Calu3 (cell line): ENCODE measurements at regions of chr2 and their contacts with region 1.

Region 1: DNA sequence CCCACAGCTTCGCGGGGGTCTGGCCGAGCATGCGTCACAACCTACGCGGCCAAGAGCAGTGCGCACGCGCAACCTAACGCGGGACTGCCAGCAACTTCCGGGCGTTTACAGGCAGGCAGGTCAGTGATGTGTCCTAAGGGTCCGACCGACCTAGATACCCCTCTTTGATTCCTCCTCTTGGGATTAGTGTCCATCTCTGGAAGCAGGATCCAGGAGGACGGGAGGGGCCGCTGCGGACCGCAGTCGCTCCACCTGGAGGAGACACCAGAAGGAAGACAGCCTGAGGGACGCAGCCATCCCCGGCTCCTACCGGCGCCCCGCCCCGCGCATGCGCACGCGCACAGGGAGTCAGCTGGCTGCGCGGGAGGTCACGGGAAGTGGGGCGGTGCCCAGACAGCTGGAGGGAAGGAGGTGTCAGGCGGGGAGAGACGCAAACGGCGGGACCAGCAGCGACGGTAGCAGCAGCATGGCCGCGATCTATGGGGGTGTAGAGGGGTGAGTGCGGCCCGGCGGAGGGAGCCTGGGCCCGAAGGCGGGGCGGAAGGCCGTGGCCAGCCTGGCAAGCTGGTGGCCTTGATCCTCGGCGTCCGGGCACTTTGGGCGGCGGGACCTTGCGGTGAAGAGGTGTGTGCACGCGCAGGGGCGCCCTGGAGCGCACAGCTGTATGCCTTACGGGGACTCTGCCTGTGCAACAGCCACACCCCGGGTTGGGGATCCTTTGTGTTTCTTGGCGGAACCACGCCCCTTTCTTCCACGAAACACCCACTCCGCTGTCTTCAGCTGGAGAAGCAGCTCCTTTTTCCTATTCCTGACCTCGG is at the start of gene NAGK:
- DNase-seq: peak; percentile 98
- H3K4me3 Mint-ChIP-seq: peak within 1 kb of the TSS; percentile 97
- H3K27ac Mint-ChIP-seq: peak within 1 kb of the TSS; percentile 90
- H3K4me1 Mint-ChIP-seq: peaks cover 31% of the 10 kb centered on the region
- H3K27me3 Mint-ChIP-seq: peaks cover 20% of the 10 kb centered on the region
- CTCF ChIP-seq: no peak
- total RNA-seq, gene NAGK: 63.2 and 75.0 TPM in 2 replicates

Region 2: DNA sequence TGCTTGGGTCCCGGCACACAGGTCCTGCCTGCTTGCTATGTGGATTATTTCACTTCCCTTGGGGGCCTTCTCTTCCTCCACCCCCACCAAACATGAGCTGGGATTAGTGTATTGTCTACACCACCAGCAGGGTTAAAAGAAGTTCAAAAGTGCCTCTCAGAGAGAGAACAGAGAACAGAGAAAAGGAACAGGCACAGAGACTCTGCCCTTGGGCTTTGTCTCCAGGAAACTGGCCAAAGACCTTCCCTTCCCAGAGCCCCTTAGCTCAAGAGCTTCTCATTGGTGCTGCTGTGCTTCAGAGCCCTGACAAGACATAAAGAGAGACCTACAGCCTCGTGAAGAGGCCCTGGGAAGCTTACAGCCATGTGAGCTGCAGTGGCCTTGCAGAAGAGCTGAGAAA is 270.9 kb before region 1 on chr2:
- CTCF ChIA-PET with region 1: no interaction called
- intact Hi-C with region 1: no loop called
- DNase-seq: no peak
- H3K4me3 Mint-ChIP-seq: no peak overlapping the region
- H3K27ac Mint-ChIP-seq: no peak overlapping the region
- H3K4me1 Mint-ChIP-seq: no peaks in the 10 kb centered on the region
- H3K27me3 Mint-ChIP-seq: peaks cover 100% of the 10 kb centered on the region
- CTCF ChIP-seq: no peak

Region 3: GRCh38 chr2:71018625-71019024 is 49.8 kb before region 1 on chr2:
- CTCF ChIA-PET with region 1: interaction called, 32 read pairs
- intact Hi-C with region 1: loop called (anchors 1 kb)
- DNase-seq: no peak
- H3K4me3 Mint-ChIP-seq: no peak overlapping the region
- H3K27ac Mint-ChIP-seq: no peak overlapping the region
- H3K4me1 Mint-ChIP-seq: peaks cover 9% of the 10 kb centered on the region
- H3K27me3 Mint-ChIP-seq: no peaks in the 10 kb centered on the region
- CTCF ChIP-seq: no peak

Region 4: DNA sequence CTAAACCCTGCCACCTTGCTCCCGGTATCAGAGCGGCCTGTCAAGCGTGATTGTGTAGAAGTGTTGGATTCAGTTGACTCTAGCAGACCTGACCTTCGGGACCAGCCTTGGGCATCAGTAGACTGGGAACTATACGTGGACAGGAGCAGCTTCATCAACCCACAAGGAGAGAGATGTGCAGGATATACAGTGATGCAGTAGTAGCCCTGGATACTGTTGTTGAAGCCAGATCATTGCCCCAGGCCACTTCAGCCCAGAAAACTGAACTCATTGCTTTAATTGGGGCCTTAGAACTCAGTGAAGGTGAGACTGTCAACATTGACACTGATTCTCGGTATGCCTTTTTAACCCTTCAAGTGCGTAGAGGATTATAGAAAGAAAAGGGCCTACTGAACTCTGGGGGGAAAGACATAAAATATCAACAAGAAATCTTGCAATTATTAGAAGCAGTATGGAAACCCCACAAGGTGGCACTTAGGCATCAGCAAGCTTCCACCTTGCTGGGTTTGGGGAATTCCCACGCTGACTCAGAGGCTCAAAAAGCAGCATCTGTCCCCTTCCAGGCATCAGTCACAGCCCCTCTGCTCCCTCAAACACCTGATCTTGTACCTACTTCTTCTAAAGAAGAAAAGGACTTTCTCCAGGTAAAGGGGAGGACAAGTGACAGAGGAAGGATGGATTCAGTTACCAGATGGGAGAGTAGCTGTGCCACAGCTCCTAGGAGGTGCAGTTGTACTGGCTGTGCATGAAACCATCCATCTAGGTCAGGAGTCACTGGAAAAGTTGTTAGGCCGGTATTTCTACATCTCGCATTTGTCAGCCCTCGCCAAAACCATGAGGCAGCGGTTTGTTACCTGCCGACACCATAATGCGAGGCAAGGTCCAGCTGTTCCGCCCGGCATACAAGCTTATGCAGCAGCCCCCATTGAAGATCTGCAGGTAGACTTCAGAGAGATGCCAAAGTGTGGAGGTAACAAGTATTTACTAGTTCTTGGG is 18.8 kb before region 1 on chr2:
- CTCF ChIA-PET with region 1: interaction called, 27 read pairs
- intact Hi-C with region 1: no loop called
- DNase-seq: peak; percentile 68
- H3K4me3 Mint-ChIP-seq: peak overlapping the region; percentile 19
- H3K27ac Mint-ChIP-seq: peak overlapping the region; percentile 60
- H3K4me1 Mint-ChIP-seq: peaks cover 33% of the 10 kb centered on the region
- H3K27me3 Mint-ChIP-seq: no peaks in the 10 kb centered on the region
- CTCF ChIP-seq: no peak